Activated CD4-positive, alpha-beta T cell treated with anti-CD3 and anti-CD28 coated beads for 36 hours (primary cell): ENCODE measurements at regions of chr19 and their contacts with region 1.

Region 1: GRCh38 chr19:16714702-16715287 is 4.9 kb upstream of the NWD1 start:
- DNase-seq: peak; percentile 75
- ATAC-seq: peak; percentile 47
- H3K4me3 Mint-ChIP-seq: no peak overlapping the region
- H3K27ac Mint-ChIP-seq: no peak overlapping the region
- H3K4me1 Mint-ChIP-seq: no peaks in the 10 kb centered on the region
- H3K27me3 Mint-ChIP-seq: peaks cover 2% of the 10 kb centered on the region

Region 2: DNA sequence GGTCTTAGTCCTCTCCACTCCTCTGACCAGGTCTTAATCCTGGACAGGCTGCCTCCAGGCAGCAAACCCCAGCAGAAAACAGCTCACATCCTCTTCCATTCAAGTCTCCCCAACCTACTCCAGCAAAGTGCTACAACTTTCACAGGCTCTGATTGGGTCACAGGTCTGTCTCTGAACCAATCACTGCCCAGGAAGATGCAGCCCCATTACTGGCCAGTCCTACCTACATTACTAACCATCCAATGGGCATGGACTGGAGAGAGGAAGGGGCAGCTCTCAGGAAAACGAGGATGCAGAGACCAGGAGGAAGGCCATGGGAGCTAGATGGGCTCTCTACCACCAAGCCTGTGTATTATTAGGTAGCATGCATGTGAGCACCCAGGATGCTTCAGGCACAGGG is 99.0 kb before region 1 on chr19:
- CTCF ChIA-PET with region 1: no interaction called
- POLR2A ChIA-PET with region 1: no interaction called
- intact Hi-C with region 1: no loop called
- DNase-seq: no peak
- ATAC-seq: peak; percentile 68
- H3K4me3 Mint-ChIP-seq: no peak overlapping the region
- H3K27ac Mint-ChIP-seq: no peak overlapping the region
- H3K4me1 Mint-ChIP-seq: peaks cover 71% of the 10 kb centered on the region
- H3K27me3 Mint-ChIP-seq: no peaks in the 10 kb centered on the region

Region 3: DNA sequence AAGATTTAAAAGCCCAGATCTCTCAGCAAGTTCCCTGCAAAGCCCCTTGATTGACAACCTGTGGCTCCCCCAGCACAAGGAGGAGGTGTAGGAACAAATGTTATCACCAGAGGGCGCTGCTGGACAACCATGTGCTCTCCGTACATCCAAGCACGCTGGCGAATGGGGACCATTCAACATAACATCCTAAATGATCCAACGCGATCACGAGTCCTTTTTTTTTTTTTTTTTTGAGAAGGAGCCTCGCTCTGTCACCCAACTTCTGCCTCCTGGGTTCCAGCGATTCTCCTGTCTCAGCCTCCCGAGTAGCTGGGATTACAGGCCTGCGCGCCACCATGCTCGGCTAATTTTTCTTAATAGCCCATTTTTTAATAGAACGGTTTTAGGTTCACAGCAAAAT is 56.8 kb after region 1 on chr19:
- CTCF ChIA-PET with region 1: no interaction called
- POLR2A ChIA-PET with region 1: no interaction called
- intact Hi-C with region 1: loop called in 1 of 2 experiments (anchors 2 kb)
- DNase-seq: peak; percentile 86
- ATAC-seq: peak; percentile 77
- H3K4me3 Mint-ChIP-seq: no peak overlapping the region
- H3K27ac Mint-ChIP-seq: no peak overlapping the region
- H3K4me1 Mint-ChIP-seq: no peaks in the 10 kb centered on the region
- H3K27me3 Mint-ChIP-seq: peaks cover 35% of the 10 kb centered on the region

Region 4: GRCh38 chr19:16944626-16945363 is 230.0 kb after region 1 on chr19:
- CTCF ChIA-PET with region 1: no interaction called
- POLR2A ChIA-PET with region 1: no interaction called
- intact Hi-C with region 1: no loop called
- DNase-seq: no peak
- ATAC-seq: no peak
- H3K4me3 Mint-ChIP-seq: no peak overlapping the region
- H3K27ac Mint-ChIP-seq: no peak overlapping the region
- H3K4me1 Mint-ChIP-seq: no peaks in the 10 kb centered on the region
- H3K27me3 Mint-ChIP-seq: peaks cover 7% of the 10 kb centered on the region